ENCODE measurements at regions of chr9 and their contacts with region 1.

Region 1: GRCh38 chr9:38160613-38161215 is 91.7 kb upstream of the SHB start:
- DNase-seq: peak; percentile 49
- H3K4me3 ChIP-seq: no peak overlapping the region
- H3K27ac ChIP-seq: no peak overlapping the region
- H3K4me1 ChIP-seq: no peaks in the 10 kb centered on the region
- H3K27me3 ChIP-seq: no peaks in the 10 kb centered on the region
- CTCF ChIP-seq: peak; percentile 77 to 86
- POLR2A ChIP-seq: no peak

Region 2: GRCh38 chr9:38117651-38118050 is 43.1 kb before region 1 on chr9:
- CTCF ChIA-PET with region 1: no interaction called
- POLR2A ChIA-PET with region 1: no interaction called
- dilution Hi-C with region 1: no loop called
- intact Hi-C with region 1: no loop called
- DNase-seq: no peak
- H3K4me3 ChIP-seq: no peak overlapping the region
- H3K27ac ChIP-seq: no peak overlapping the region
- H3K4me1 ChIP-seq: no peaks in the 10 kb centered on the region
- H3K27me3 ChIP-seq: peaks cover 2 to 8% of the 10 kb centered on the region in 2 experiments
- CTCF ChIP-seq: no peak
- POLR2A ChIP-seq: no peak

Region 3: GRCh38 chr9:38149647-38150046 is 11.1 kb before region 1 on chr9:
- CTCF ChIA-PET with region 1: interaction called, 18 read pairs
- POLR2A ChIA-PET with region 1: no interaction called
- dilution Hi-C with region 1: no loop called
- intact Hi-C with region 1: no loop called
- DNase-seq: no peak
- H3K4me3 ChIP-seq: no peak overlapping the region
- H3K27ac ChIP-seq: no peak overlapping the region
- H3K4me1 ChIP-seq: no peaks in the 10 kb centered on the region
- H3K27me3 ChIP-seq: peaks cover 8 to 12% of the 10 kb centered on the region in 2 experiments
- CTCF ChIP-seq: no peak
- POLR2A ChIP-seq: no peak

Region 4: DNA sequence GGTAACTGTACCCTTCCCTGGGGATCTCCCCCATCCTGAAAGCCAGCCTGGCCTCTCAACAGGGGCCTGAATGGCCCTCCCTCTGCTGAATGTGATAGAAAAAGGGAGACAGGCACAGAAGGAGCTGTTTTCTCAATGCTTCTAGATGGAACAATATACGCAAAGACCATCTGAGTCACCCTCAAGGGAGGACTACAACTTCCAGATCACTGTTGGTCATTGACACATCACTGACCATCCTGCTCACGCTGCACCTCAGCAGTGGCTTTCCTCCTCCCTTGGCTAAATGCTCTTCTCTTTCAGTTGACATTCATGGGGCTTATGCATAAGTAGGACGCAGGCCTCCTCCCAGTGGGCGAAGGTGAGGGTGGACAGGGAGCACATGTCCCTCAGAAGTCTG is 20.5 kb after region 1 on chr9:
- CTCF ChIA-PET with region 1: interaction called, 10 read pairs
- POLR2A ChIA-PET with region 1: no interaction called
- dilution Hi-C with region 1: no loop called
- intact Hi-C with region 1: no loop called
- DNase-seq: no peak
- H3K4me3 ChIP-seq: no peak overlapping the region
- H3K27ac ChIP-seq: no peak overlapping the region
- H3K4me1 ChIP-seq: peaks cover 8% of the 10 kb centered on the region
- H3K27me3 ChIP-seq: no peaks in the 10 kb centered on the region
- CTCF ChIP-seq: no peak
- POLR2A ChIP-seq: no peak

Region 5: DNA sequence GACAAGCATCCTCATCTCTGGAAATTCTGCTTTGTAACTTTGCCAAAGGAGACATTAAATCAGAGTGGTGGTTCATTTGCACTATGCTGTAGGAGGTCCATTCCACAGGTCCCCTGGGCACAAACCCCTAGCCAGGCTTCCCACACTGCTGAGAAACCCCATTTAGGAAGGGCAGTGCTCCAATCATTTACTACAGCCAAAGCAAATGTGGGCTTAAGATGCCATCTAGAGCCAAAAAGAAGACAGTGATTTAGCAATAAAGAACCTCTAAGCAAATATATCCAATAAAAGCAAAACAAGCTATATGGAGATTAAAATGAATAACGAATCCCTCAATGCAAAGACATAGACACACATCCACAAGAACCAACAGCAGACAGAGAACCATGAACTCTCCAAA is 102.8 kb after region 1 on chr9:
- CTCF ChIA-PET with region 1: interaction called, 6 read pairs
- POLR2A ChIA-PET with region 1: no interaction called
- dilution Hi-C with region 1: no loop called
- intact Hi-C with region 1: loop called (anchors 1 kb)
- DNase-seq: peak; percentile 53
- H3K4me3 ChIP-seq: no peak overlapping the region
- H3K27ac ChIP-seq: no peak overlapping the region
- H3K4me1 ChIP-seq: no peaks in the 10 kb centered on the region
- H3K27me3 ChIP-seq: peaks cover 6 to 13% of the 10 kb centered on the region in 2 experiments
- CTCF ChIP-seq: peak in 1 of 2 donors; percentile 35
- POLR2A ChIP-seq: no peak

Region 6: DNA sequence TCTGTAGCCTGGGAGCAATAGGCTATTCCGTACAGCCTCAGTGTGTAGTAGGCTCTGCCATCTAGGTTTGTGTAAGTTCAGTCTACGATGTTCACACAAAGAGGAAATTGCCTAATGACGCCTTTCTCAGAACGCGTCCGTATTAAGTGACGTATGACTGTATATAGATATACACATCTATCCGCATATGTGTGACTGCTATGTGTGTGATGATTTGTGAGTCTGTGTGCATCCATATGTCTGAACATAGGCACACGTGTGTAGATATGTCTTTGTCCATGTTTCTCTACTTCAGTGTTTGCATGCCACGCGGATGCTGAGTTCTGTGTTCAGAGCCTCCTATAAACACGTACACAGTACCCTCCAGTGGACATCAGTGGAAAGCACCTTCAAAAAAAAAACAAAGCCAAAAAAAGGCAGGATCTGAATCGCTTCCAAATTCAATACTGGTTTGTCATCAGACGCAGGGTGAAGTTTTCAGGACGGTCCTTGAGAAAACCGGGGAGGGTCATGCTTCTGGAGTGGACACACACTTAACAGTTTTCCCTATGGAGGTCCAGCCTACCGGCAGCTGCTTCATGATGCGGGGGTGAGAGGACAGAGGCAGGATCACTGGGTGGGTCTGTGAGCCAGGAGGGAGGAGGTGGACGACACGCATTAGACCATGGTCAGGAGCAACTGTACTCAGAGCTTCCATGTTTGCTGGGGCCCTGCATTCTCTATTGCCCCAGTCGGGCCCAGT is 202.3 kb after region 1 on chr9:
- CTCF ChIA-PET with region 1: no interaction called
- POLR2A ChIA-PET with region 1: no interaction called
- dilution Hi-C with region 1: no loop called
- intact Hi-C with region 1: loop called (anchors 10 kb)
- DNase-seq: peak; percentile 66
- H3K4me3 ChIP-seq: no peak overlapping the region
- H3K27ac ChIP-seq: no peak overlapping the region
- H3K4me1 ChIP-seq: no peaks in the 10 kb centered on the region
- H3K27me3 ChIP-seq: peaks cover 2 to 3% of the 10 kb centered on the region in 2 experiments
- CTCF ChIP-seq: peak; percentile 47 to 55
- POLR2A ChIP-seq: no peak